ENCODE measurements at regions of chr6 and their contacts with region 1.

Region 1: DNA sequence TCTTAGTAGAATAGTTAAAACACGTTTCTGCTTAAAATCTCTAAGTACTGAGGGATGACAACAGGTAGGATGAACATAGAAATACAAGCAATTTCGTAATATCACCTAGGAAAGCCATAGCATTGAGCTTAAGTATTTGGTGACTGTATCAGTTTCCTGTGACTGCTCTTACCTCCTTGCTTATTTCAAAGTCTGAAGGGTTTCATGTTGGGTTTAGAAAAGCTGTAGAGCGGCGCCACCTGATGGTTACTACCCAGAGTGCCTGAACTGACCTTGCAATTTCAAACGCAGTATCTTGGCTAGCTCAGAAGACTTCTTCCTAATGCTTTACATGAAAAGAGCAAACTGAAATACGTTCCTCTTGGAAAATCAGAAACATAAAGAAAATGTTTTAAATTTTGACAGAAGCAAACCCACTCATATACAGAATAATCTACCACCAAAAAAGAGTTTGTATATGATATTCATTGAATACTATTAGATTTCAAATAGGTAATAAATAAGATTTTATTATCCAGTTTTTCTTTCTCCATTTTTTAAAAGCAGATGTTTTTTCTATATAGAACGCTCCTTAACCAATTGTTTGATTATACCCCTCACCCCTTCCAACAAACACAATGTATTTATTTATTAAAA is 82.3 kb upstream of the RIPOR2 start:
- DNase-seq: peak; percentile 70
- CTCF ChIP-seq: peak; percentile 82

Region 2: DNA sequence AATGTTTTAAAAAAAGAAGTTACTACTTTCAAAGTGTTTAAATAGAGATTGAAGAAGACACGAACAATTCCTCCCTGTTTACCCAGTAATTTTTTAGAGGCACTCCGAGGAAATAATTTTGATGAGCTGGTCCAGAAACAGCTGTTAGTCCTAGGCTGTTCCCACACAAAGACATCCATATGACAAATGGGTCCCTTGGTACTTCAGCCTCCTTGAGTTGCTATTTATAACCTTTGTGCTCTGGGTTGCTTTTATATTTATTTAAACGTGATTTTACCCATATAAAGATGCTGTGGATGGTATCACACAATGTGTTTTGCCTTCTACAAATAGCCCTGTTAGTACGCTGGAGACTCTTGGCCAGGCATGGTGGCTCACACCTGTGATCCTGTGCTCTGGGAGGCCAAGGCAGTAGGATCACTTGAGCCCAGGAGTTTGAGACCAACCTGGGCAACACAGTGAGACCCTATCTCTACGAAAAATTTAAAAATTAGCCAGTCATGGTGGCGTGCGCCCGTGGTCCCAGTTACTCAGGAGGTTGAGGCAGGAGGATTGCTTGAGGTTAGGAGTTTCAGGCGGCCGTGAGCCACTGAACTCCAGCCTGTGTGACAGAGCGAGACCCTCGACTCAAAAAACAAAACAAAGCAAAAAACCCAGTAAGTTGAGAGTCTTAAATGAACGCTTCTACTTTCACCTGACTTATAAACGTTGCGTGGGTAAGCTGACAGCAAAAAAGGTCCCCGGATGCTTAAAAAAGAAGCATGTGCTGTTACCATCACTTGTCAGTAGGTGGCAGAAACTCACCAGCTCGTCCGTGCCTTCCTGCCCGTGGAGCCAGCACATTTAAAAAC is 162.4 kb before region 1 on chr6:
- CTCF ChIA-PET with region 1: interaction called, 122 read pairs
- POLR2A ChIA-PET with region 1: no interaction called
- DNase-seq: peak; percentile 78
- CTCF ChIP-seq: peak; percentile 81

Region 3: GRCh38 chr6:24874776-24875534 is 143.1 kb before region 1 on chr6:
- CTCF ChIA-PET with region 1: interaction called, 12 read pairs
- POLR2A ChIA-PET with region 1: no interaction called
- DNase-seq: no peak
- CTCF ChIP-seq: no peak

Region 4: GRCh38 chr6:24888715-24889370 is 129.2 kb before region 1 on chr6:
- CTCF ChIA-PET with region 1: interaction called, 10 read pairs
- POLR2A ChIA-PET with region 1: no interaction called
- DNase-seq: no peak
- CTCF ChIP-seq: no peak

Region 5: DNA sequence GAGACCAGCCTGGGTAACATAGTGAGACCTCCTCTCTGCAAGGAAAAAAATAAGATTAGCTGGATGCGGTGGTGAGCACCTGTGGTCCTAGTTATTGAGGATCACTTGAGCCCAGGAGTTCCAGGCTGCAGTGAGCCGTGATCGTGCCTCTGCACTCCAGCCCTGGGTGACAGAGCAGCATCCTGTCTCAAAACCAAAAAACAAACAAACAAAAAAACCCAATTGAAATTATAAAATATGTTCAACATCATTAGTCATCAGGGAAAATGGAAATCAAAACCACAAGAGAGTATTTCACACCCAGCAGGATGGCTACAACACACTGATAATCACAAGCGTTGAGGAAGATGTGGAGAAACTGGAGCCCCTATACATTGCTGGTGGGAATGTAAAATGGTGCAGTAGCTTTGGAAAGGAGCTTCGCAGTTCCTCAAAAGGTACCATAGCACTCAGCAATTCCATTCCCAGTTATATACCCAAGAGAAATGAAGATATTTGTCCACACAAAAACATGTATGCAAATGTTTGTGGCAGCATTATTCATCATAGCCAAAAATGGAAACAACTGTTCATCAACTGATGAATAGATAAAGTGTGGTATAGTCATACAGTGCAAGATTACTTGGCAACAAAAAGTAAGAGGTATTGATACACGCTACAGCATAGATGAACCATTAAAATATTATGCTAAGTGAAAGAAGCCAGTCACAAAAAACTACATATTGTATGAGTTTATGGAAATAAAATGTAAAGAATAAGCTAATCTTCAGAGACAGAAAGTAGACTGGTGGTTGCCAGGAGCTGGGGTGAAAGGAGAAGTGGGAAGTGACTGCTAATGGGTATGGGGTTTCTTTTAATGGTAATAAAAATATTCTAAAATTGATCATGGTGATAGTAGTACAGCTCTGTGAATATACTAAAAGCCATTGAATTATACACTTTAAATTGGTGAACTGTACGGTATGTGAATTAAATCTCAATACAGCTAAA is 43.6 kb before region 1 on chr6:
- CTCF ChIA-PET with region 1: no interaction called
- POLR2A ChIA-PET with region 1: no interaction called
- DNase-seq: no peak
- CTCF ChIP-seq: no peak

Region 6: DNA sequence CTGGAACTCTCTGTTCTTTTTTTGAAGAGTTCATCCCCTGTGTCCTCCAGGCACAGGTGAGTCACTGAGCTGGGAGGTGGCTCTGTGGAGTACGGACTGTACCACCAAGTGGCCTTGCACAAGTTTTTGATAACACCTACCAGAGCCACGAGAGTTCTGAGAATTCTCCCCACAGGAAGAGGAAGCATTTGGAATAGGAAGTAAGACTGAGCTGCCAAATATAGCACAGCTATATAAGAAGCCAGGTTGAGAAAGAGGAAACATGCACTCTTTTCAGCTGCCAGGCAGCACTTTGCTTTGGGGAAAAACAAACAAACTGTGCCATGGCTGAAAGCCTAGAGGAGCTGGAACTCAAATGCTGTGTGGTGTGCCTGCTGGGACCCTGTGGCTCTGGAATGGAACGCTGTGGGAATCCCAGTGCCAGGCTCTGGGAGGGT is 11.5 kb before region 1 on chr6:
- CTCF ChIA-PET with region 1: interaction called, 49 read pairs
- POLR2A ChIA-PET with region 1: no interaction called
- DNase-seq: peak; percentile 26
- CTCF ChIP-seq: no peak

Region 7: GRCh38 chr6:25035527-25036435 is 17.7 kb after region 1 on chr6:
- CTCF ChIA-PET with region 1: interaction called, 10 read pairs
- POLR2A ChIA-PET with region 1: no interaction called
- DNase-seq: no peak
- CTCF ChIP-seq: no peak

Region 8: DNA sequence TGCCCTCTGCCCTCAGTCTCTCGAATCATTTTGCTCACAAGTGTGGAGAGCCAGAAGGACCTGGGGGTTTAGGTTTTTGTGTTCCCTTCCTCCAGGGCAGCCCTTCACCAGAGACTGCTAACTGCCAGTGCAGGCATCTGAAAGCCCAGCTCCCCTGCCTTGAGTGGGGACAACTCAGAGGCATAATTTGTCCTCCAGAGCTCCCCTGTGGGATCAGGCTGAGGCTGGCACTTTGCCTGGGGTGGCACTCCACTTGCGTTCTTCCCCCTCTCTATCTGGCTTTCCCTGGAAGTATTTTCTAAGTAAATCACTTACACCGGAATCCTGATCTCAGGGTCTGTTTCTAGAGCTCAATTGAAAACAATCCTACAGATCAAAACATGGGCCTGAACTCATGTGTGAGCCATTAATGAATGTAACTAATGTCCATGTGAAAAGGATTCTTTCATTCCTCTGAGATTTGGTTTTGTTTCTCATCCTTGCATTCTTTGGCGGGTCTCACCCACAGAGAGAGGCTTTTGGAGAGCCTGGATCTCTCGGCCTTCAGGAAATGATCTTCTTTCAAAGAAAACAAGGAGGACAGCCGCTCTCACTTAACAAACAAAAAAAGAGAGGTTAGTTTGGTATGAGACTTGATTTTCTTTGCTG is 43.4 kb after region 1 on chr6:
- CTCF ChIA-PET with region 1: interaction called, 13 read pairs
- POLR2A ChIA-PET with region 1: no interaction called
- DNase-seq: no peak
- CTCF ChIP-seq: no peak

Region 9: GRCh38 chr6:25094726-25095125 is 76.7 kb after region 1 on chr6:
- CTCF ChIA-PET with region 1: no interaction called
- POLR2A ChIA-PET with region 1: no interaction called
- DNase-seq: no peak
- CTCF ChIP-seq: no peak

Region 10: GRCh38 chr6:25138237-25139125 is 120.4 kb after region 1 on chr6:
- CTCF ChIA-PET with region 1: no interaction called
- POLR2A ChIA-PET with region 1: no interaction called
- DNase-seq: peak; percentile 29
- CTCF ChIP-seq: peak; percentile 20

Region 11: DNA sequence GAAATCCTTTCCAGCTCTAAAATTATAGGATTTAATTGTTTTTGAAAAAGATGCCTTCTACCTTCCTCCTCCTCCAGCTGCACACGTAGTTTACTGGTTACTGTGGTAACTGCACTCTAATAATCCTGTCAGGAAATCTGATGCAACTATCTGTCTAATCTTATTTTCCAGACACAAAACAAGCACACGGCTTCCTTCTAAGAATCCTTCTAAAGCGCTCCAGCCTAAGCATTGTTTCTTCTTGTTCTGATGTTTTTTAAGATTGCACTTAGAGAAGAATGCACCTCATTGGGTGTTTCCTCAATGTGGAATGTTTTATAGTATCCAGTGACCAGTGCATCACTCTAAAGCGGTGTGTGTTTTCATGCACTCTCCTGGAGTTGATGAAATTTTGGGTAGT is 324.8 kb after region 1 on chr6:
- CTCF ChIA-PET with region 1: no interaction called
- POLR2A ChIA-PET with region 1: no interaction called
- DNase-seq: no peak
- CTCF ChIP-seq: no peak